BJ (cell line): ENCODE measurements at regions of chr14 and their contacts with region 1.

Region 1: GRCh38 chr14:50321009-50321660 is 9.0 kb downstream of the DMAC2L start:
- DNase-seq: peak; percentile 65
- H3K4me3 ChIP-seq: peak overlapping the region; percentile 25
- H3K27me3 ChIP-seq: no peaks in the 10 kb centered on the region
- CTCF ChIP-seq: peak; percentile 88

Region 2: GRCh38 chr14:50191499-50191898 is 129.6 kb before region 1 on chr14:
- CTCF ChIA-PET with region 1: no interaction called
- POLR2A ChIA-PET with region 1: no interaction called
- DNase-seq: no peak
- H3K4me3 ChIP-seq: no peak overlapping the region
- H3K27me3 ChIP-seq: no peaks in the 10 kb centered on the region
- CTCF ChIP-seq: no peak

Region 3: DNA sequence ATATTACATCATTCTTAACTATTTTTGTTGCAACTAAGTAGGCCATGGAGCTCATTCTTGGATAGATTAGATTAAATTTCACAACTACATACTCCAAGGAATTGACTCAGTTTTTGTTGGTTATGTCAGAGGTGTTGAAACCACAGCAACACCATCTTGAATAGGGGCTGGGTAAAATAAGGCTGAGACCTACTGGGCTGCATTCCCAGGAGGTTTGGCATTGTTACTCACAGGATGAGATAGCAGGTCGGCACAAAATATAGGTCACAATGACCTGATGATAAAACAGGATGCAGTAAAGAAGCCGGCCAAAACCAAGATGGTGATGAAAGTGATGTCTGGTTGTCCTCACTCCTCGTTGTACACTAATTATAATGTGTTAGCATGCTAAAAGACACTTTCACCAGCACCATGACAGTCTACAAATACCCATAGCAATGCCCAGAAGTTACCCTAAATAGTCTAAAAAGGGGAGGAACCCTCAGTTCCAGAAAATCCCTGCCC is 11.9 kb after region 1 on chr14:
- CTCF ChIA-PET with region 1: interaction called, 43 read pairs
- POLR2A ChIA-PET with region 1: interaction called, 4 read pairs
- DNase-seq: peak; percentile 33
- H3K4me3 ChIP-seq: no peak overlapping the region
- H3K27me3 ChIP-seq: no peaks in the 10 kb centered on the region
- CTCF ChIP-seq: no peak

Region 4: DNA sequence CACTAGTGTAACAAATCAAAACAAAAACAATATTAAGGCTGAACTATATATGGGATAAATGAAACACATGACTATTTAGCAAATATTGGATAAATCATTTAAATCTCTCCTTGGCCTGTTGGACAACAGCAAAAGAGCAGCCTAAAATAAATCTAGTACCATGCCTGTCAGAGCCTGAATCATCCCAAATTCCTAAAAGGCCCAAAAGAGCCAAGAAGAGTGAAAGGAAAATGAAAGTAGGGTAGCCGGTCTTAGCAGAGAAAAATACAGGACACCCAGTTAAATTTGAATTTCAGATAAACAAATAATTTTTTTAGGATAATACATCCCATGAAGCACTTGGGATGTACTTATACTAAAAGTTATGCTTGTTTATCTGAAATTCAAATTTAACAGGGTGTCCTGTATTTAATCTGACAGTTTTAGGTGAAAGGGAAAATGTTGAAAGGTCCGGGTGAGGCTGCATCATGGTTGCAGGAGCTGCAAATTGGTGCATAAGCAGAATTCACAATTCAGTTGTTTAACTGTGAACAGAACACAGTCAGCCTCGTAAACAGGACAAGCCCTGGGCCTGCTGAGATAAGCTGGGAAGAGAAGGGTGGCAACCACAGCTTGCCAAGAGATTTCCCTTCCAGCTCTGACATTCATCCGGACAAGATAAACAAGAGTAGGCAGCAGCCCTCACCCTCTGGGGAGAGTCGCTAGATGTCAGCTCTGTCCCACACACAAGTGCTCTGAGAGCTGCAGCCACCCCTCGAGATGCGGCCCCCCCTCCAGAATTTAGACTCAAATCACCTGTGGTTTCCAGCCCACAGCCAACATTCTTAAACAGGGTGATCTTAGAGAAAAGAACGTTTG is 21.3 kb after region 1 on chr14:
- CTCF ChIA-PET with region 1: interaction called, 29 read pairs
- POLR2A ChIA-PET with region 1: no interaction called
- DNase-seq: peak; percentile 58
- H3K4me3 ChIP-seq: 0 out of 2 replicates have a peak overlapping the region, but pooled peaks have one; percentile 1
- H3K27me3 ChIP-seq: no peaks in the 10 kb centered on the region
- CTCF ChIP-seq: peak; percentile 40; the same call in 1 of the 2 replicates

Region 5: DNA sequence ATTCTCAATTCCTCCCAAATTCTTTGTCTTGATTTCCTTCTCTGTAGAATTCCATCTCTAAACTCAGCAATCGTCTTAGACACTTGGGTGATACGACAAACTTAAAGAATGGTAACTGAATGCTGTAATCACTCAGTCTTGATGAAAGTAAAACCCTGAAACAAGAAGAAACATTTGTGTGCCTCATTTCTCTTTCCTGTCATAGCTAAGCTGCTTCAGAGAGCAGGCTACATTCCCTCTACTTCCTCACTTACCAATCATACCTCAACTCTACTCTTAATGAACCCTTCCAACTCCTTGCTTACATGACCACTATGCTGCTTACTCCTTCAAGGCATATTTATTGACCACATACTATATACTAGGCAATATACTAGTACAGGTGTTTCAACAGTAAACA is 202.9 kb after region 1 on chr14:
- CTCF ChIA-PET with region 1: interaction called, 13 read pairs
- POLR2A ChIA-PET with region 1: no interaction called
- DNase-seq: no peak
- H3K4me3 ChIP-seq: no peak overlapping the region
- H3K27me3 ChIP-seq: no peaks in the 10 kb centered on the region
- CTCF ChIP-seq: no peak

Region 6: DNA sequence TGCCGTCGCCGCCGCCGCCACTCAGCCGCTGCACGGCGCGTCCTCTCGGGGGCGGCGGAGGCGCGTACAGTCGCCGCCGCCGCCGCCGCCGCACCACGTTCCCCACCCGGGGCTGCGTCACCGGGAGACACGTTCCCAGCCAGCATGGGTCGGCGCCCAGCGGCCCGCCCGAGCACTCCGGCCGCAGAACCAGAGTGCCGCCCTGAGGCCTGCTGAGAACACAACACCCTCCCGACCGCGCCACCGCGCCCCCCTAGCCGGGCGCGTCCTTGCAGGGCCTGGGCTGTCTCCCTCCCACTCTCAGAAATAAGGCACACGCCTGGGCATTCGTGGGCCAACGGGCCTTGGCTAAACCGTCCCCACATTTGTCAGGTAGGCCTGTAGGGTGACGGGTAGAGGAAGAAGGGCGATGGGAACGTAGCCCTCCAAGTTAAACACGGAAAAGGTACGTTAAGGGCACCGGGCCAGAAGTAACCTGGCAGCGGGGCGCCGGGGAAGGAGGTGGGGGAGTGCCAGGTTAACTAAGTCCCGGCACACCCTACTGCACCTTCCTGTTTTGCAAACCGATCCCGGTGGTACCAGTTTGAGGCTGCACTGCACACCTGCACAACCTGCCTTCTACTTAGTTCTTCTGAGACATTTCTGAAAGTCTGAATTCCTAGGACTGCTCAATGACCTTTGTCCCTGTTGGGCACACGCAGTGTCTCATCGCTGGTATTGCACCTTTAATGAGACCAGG is 211.5 kb after region 1 on chr14 and contains the start of gene MAP4K5:
- CTCF ChIA-PET with region 1: interaction called, 18 read pairs
- POLR2A ChIA-PET with region 1: no interaction called
- DNase-seq: no peak
- H3K4me3 ChIP-seq: peak within 1 kb of the TSS; percentile 92
- H3K27me3 ChIP-seq: no peaks in the 10 kb centered on the region
- CTCF ChIP-seq: peak; percentile 84
- polyA plus RNA-seq, gene MAP4K5: 8.8 and 15.7 TPM in 2 replicates

Region 7: GRCh38 chr14:50542941-50543418 is 221.8 kb after region 1 on chr14:
- CTCF ChIA-PET with region 1: interaction called, 13 read pairs
- POLR2A ChIA-PET with region 1: no interaction called
- DNase-seq: no peak
- H3K4me3 ChIP-seq: no peak overlapping the region
- H3K27me3 ChIP-seq: peaks cover 2% of the 10 kb centered on the region
- CTCF ChIP-seq: peak; percentile 54